ENCODE measurements at regions of chr1 and their contacts with region 1.

Region 1: DNA sequence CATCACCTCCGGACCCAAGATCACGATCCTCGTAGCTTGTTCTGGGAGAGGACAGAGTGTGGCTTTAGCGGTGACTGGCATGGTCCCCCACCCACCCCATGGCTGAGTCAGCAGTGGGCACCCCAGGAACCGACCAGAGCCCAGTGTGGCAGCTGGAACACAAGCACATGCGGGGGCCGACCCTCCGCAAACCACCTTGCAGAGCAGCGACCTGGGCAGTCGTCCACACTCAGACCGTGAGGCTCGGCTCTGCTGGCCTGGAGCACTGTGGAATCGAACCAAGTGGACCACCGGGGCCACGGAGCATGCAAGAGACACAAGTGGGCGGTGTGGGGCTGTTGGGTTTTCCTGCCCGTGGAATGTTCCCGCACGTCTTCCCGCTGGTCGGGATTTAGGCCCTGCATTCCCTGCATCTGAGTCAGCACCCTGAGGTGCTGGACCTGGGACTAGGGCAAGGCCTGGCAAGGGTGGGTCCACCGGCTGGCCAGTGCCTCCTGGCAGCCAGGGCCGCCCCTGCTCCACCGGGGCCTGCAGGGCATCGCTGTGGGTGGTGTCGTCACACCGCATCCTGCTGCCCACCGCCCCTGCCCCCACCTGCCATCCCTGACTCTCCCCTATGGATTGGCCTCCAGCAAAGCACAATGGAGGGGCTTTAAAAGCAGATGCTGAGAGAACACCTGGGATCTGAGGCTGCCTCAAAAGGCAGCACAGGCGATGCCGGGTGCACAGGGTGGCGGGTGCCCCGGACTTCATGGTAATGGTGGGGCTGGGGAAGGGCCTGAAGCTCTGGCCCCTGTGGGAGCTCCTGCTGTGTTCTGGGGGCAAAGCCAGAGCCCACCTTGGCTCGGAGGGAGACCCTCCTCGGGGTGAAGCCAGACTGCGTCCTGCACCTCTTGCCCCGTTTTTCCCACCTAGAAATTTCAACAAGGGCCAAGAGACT is 18.5 kb downstream of the MORN1 start:
- DNase-seq: no peak
- H3K4me3 ChIP-seq: no peak overlapping the region
- H3K27ac ChIP-seq: no peak overlapping the region
- H3K4me1 ChIP-seq: no peaks in the 10 kb centered on the region
- H3K27me3 ChIP-seq: no peaks in the 10 kb centered on the region

Region 2: DNA sequence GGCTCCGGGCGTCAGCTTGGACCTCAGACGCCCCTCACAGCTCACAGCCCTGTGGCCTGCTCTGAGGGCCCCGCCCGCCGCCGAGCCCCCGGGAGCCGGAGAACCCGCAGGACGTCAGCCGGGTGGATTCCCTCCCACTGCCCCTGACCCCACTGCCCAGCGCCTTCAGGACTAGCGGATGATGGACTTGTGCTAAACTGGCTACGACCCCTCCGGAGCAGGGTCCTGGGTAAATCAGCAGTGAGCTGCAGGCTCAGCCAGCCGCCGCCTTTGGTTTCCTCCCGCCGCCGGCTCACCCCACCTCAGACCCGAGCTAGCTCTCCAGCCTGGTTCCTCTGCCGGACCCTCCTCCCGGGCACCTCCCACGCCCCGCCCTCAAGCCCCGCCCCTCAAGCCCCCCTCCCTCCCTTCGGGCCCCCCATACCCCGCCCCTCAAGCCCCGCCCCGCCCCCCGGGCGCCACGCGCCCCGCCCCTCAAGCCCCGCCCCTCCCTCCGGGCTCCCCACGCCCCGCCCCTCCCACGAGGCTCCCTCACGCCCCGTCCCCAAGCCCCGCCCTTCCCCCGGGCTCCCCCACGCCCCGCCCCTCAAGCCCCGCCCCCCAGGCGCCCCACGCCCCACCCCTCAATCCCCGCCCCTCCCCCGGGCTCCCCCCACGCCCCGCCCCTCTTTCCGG is 168.2 kb before region 1 on chr1:
- in situ Hi-C with region 1: loop called (anchors 5 kb)
- DNase-seq: peak; percentile 78
- H3K4me3 ChIP-seq: peak overlapping the region; percentile 68
- H3K27ac ChIP-seq: peak overlapping the region; percentile 75
- H3K4me1 ChIP-seq: peaks cover 29% of the 10 kb centered on the region
- H3K27me3 ChIP-seq: no peaks in the 10 kb centered on the region

Measured in GM23248 (cell line).